ENCODE measurements at regions of chr6 and their contacts with region 1.

Region 1: DNA sequence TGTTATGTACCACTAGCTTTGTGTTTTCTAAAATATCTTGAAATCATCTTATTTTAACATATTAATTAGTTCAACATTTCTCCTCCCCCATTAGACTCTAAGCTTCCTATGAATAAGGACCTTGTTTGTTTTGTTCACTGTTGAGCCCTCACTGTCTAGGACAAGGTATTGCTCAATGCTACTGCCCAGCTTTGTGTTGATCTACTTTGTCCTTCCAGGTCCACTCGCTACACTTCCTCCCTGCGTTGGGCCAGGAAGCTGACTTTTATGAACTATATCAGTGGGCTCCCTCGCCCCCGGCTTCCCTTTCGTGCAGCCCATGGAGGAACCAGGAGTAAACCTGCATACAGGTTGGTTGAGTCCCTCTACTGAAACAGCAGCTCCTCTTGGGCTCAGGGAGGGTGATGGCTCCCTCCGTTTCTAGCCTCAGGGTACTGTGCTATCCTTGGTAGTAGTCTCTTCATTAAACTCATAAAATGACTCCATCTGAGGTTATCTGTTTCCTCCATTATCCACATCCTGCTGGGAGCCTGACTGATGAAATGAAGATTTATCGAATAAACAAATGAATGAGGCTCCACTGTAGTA is 272.5 kb downstream of the CLIC5 start:
- DNase-seq: no peak
- ATAC-seq: no peak
- H3K4me3 ChIP-seq: no peak overlapping the region
- H3K27ac ChIP-seq: no peak overlapping the region
- H3K4me1 ChIP-seq: peaks cover 2% of the 10 kb centered on the region; the same call in 1 of the 2 replicates
- H3K27me3 ChIP-seq: no peaks in the 10 kb centered on the region; the same call in 1 of the 2 replicates
- CTCF ChIP-seq: no peak
- POLR2A ChIP-seq: no peak
- RAD21 ChIP-seq: no peak

Region 2: GRCh38 chr6:45278367-45278766 is 464.8 kb before region 1 on chr6:
- CTCF ChIA-PET with region 1: no interaction called
- POLR2A ChIA-PET with region 1: interaction called, 24 read pairs
- dilution Hi-C with region 1: no loop called
- in situ Hi-C with region 1: no loop called
- intact Hi-C with region 1: no loop called
- DNase-seq: peak; percentile 54
- ATAC-seq: no peak
- H3K4me3 ChIP-seq: no peak overlapping the region
- H3K27ac ChIP-seq: no peak overlapping the region
- H3K4me1 ChIP-seq: no peaks in the 10 kb centered on the region; the same call in 1 of the 2 replicates
- H3K27me3 ChIP-seq: no peaks in the 10 kb centered on the region
- CTCF ChIP-seq: no peak
- POLR2A ChIP-seq: no peak
- RAD21 ChIP-seq: no peak

Region 3: GRCh38 chr6:45478240-45478639 is 264.9 kb before region 1 on chr6:
- CTCF ChIA-PET with region 1: no interaction called
- POLR2A ChIA-PET with region 1: no interaction called
- dilution Hi-C with region 1: no loop called
- in situ Hi-C with region 1: no loop called
- intact Hi-C with region 1: no loop called
- DNase-seq: peak; percentile 79
- ATAC-seq: no peak
- H3K4me3 ChIP-seq: no peak overlapping the region
- H3K27ac ChIP-seq: no peak overlapping the region
- H3K4me1 ChIP-seq: peaks cover 9% of the 10 kb centered on the region
- H3K27me3 ChIP-seq: no peaks in the 10 kb centered on the region
- CTCF ChIP-seq: no peak
- POLR2A ChIP-seq: no peak
- RAD21 ChIP-seq: no peak

Region 4: DNA sequence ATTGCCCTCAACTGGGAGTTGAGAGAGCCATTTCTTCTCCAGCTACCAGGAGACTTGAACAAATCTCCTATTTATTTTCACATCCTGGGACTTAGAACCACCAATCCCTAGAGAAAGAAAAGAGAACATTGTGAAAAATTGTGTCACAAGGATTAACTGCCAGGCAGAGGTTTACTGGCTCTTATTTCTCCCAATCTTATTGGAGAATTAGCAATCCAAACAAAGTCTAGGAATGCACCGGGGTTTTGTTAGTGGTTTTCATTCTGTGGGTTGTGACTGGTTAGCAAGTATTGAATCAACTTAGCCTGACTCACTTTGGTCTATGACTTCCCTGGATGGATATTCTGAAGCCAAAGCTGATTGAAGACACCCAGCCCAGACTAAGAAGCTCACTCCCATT is 448.8 kb after region 1 on chr6:
- CTCF ChIA-PET with region 1: no interaction called
- POLR2A ChIA-PET with region 1: no interaction called
- dilution Hi-C with region 1: no loop called
- in situ Hi-C with region 1: no loop called
- intact Hi-C with region 1: no loop called
- DNase-seq: peak; percentile 41
- ATAC-seq: no peak
- H3K4me3 ChIP-seq: no peak overlapping the region
- H3K27ac ChIP-seq: no peak overlapping the region
- H3K4me1 ChIP-seq: no peaks in the 10 kb centered on the region
- H3K27me3 ChIP-seq: no peaks in the 10 kb centered on the region
- CTCF ChIP-seq: no peak
- POLR2A ChIP-seq: no peak
- RAD21 ChIP-seq: no peak

Measured in IMR-90 (cell line).